ENCODE measurements at regions of chr5 and their contacts with region 1.

Region 1: GRCh38 chr5:115069087-115069968 is 100.4 kb downstream of the TRIM36 start:
- DNase-seq: peak; percentile 12
- ATAC-seq: peak; percentile 70
- H3K4me3 ChIP-seq: no peak overlapping the region
- H3K27ac ChIP-seq: peak overlapping the region; percentile 48; the same call in 1 of the 2 replicates
- H3K4me1 ChIP-seq: no peaks in the 10 kb centered on the region
- H3K27me3 ChIP-seq: no peaks in the 10 kb centered on the region
- CTCF ChIP-seq: peak; percentile 24 to 43 (median 43); a peak in 5 of 6 replicates
- EP300 ChIP-seq: no peak
- POLR2A ChIP-seq: no peak
- RAD21 ChIP-seq: peak; percentile 63

Region 2: DNA sequence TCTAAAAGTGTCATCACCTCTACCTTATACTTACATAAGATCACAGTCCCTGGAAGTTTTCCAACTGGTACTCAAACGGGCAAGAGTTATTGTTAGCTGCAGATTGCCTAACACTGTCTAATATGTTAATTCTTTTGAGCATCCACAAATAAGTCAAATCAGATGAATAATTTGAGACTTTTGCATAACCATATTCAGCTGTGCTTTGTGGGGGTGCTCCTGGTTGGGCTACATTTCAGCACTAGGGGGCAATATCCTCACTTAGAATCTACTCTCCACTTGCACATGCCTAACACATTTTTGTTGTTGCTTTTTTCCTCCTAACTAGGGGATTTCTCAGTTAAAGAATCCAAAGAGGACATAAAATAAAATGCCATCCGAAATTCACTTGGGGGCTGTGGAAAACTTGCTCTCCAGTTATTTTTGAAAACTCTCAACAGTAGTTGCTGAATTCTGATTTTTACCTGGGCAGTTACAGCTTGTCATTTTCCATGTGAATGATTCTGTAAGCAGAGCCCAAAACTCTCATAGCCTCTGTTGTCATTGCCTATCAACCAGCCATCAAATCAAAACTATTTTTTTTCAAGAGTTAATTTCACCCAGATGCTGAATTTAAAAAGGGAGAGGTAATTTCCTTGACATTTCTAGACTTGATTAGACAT is 28.8 kb after region 1 on chr5:
- CTCF ChIA-PET with region 1: interaction called, 15 read pairs
- POLR2A ChIA-PET with region 1: no interaction called
- RAD21 ChIA-PET with region 1: interaction called, 3 read pairs
- SMC1A ChIA-PET with region 1: no interaction called
- in situ Hi-C with region 1: no loop called
- intact Hi-C with region 1: no loop called
- DNase-seq: peak; percentile 7
- ATAC-seq: peak; percentile 97
- H3K4me3 ChIP-seq: no peak overlapping the region
- H3K27ac ChIP-seq: no peak overlapping the region
- H3K4me1 ChIP-seq: no peaks in the 10 kb centered on the region
- H3K27me3 ChIP-seq: no peaks in the 10 kb centered on the region
- CTCF ChIP-seq: peak; percentile 77 to 85 (median 78)
- EP300 ChIP-seq: no peak
- POLR2A ChIP-seq: no peak
- RAD21 ChIP-seq: peak; percentile 81

Measured in GM12878 (cell line).